Dorsolateral prefrontal cortex (tissue), 120 donors: ENCODE measurements at regions of chr5 and their contacts with region 1.

Region 1: DNA sequence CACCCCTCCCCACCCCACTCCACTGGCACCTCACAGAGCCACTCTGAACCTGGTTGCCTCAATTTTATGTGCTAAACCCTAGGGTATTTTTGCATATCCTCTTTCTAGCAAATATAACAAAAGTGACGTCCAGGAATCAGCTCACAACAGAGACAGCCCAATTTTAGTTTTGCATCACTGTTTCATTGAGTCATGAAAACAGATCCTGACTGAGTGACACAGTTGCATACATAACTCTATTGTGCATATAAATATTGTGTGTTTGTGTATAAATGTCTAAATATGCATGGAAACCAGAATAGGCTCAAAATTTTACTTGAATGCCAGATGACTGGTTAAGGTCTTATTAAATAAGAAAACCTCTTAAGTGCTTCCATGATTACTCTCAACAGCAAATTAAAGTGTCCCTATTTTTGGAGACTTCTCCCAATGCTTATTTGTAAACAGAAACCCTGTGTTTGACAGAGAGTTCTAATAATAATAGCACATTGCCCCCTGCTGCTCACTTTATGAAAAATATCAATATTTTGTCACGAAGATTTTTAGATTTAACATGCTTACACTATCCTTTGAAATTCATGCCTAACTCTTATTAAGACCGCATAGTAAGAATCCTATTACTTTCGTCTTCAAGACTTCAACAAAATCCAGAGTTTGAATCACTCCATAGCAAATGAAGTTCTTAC is 75.5 kb upstream of the PRRC1 start:
- DNase-seq: no peak
- H3K4me3 ChIP-seq: peak overlapping the region in 1 of 59 donors; percentile 24
- H3K27ac ChIP-seq: peak overlapping the region in 55 of 59 donors; percentile 1 to 82 (median 65)
- H3K27me3 ChIP-seq: no peaks in the 10 kb centered on the region
- CTCF ChIP-seq: peak; percentile 33 to 82 (median 60)

Region 2: DNA sequence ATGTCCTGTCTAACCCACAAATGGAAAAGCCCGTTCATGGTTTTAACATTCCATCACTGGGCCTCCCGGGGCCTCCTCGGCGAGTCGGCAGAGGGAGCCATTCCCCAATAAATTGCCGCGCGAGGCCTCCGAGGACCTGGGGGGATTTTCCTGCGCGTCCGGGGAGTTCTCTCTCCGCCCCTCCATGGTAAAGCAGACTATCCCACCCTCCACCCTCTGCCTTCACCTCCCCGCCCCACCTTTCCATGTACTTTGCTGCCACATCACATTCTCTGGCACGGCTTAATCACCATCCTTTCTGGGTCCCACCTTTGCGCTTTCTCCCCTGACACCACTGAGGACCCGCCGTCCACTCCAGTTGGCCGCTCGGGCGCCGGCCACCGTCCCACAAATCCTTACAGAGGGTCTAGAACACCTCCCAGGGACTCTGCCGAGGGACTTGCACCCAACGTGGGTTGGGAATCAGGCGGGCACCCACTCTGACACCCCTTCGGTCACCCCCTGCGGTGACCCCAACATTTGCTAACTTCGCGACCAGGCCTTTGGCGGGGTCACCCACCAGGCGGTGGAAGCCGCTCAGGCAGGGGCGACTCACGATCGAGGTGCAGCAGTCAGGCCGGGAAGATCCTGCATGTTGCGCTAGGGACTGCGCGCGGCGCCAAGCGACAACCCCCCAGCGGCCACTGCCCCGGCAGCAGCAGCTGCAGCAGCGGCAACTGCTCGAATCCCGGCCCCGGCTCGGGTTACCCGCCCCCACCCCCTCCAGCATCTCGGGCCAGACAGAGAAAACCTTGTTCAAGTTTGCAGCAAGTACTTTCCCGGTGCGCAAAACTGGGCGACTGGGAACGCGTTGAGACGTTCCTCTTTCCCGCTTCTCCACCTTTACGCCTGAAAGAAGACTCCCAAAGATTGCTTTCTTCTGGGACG is 151.7 kb before region 1 on chr5 and contains the start of gene MEGF10:
- intact Hi-C with region 1: loop called (anchors 1 to 5 kb)
- DNase-seq: peak; percentile 41 to 84 (median 73)
- H3K4me3 ChIP-seq: peak within 1 kb of the TSS; percentile 47 to 86 (median 72)
- H3K27ac ChIP-seq: peak within 1 kb of the TSS; percentile 72 to 99 (median 95)
- H3K27me3 ChIP-seq: peaks cover 0 to 6% (median 0%) of the 10 kb centered on the region in 45 donors
- CTCF ChIP-seq: peak; percentile 51 to 88 (median 79)
- total RNA-seq, gene MEGF10: 22.4 to 157 (median 67.0) TPM

Region 3: GRCh38 chr5:127296321-127296720 is 145.6 kb before region 1 on chr5:
- intact Hi-C with region 1: loop called in 1 of 2 experiments (anchors 5 kb)
- DNase-seq: no peak
- H3K4me3 ChIP-seq: peak overlapping the region in 1 of 59 donors; percentile 14
- H3K27ac ChIP-seq: peak overlapping the region in 57 of 59 donors; percentile 39 to 100 (median 96)
- H3K27me3 ChIP-seq: peaks cover 0 to 6% (median 0%) of the 10 kb centered on the region in 45 donors
- CTCF ChIP-seq: no peak

Region 4: GRCh38 chr5:127492854-127493738 is 51.2 kb after region 1 on chr5:
- intact Hi-C with region 1: loop called (anchors 2 to 10 kb)
- DNase-seq: no peak
- H3K4me3 ChIP-seq: peak overlapping the region in 1 of 59 donors; percentile 16
- H3K27ac ChIP-seq: no peak overlapping the region
- H3K27me3 ChIP-seq: peaks cover 0 to 6% (median 0%) of the 10 kb centered on the region in 45 donors
- CTCF ChIP-seq: peak; percentile 66 to 99 (median 92)